ENCODE measurements at regions of chr14 and their contacts with region 1.

Region 1: GRCh38 chr14:54805521-54806322 is 96.9 kb downstream of the GCH1 start:
- DNase-seq: peak; percentile 86
- ATAC-seq: peak; percentile 88
- H3K4me3 Mint-ChIP-seq: no peak overlapping the region
- H3K27ac Mint-ChIP-seq: no peak overlapping the region
- H3K4me1 Mint-ChIP-seq: peaks cover 2% of the 10 kb centered on the region
- H3K27me3 Mint-ChIP-seq: peaks cover 21% of the 10 kb centered on the region
- CTCF ChIP-seq: peak; percentile 93

Region 2: GRCh38 chr14:54698966-54699530 is 106.7 kb before region 1 on chr14:
- CTCF ChIA-PET with region 1: no interaction called
- POLR2A ChIA-PET with region 1: no interaction called
- intact Hi-C with region 1: no loop called
- DNase-seq: no peak
- ATAC-seq: no peak
- H3K4me3 Mint-ChIP-seq: no peak overlapping the region
- H3K27ac Mint-ChIP-seq: no peak overlapping the region
- H3K4me1 Mint-ChIP-seq: peaks cover 3% of the 10 kb centered on the region
- H3K27me3 Mint-ChIP-seq: peaks cover 22% of the 10 kb centered on the region
- CTCF ChIP-seq: no peak

Region 3: DNA sequence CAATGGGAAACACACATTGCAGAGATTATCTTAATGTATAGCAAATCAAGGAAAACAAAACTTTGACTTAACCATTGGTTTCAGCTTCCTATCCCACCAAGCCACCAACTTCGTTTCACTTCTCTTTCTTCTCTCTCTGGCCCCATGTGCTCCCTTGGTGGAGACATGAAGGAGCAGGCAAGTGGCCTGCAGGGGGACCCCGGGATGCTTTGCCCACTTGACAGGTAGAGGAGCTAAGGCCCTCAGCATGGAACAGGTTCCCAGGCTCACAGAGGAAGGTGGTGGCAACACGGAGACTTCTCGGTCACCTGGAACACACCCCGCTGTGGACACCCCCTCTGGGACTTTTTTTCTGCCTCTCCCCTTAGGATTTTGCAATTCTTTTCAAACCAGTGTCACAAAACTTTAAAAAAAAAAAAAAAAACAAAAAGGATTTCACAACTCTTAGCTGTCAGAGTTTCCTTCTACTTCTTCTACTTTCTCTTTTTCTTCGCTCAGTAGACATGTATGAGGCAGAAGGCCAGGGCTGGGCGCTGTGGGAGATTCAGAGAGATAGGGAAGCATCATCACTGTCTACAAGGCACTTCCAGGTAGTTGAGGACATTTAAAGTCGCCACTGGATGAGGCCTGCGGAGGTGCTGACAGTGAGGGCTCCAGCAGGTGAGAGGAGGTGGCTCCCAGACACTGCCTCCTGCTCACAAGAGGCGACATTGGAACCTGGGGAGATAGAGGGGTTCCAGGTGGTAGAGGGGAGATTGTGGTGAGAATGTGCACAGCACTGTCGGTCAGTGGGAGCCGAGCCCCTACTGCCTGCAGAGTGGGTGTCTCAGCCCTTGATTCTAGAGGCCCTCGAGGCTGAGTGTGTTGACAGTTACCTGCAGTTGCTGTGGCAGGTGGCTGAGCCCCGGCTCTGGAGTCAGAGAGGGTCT is 22.7 kb before region 1 on chr14:
- CTCF ChIA-PET with region 1: interaction called, 82 read pairs
- POLR2A ChIA-PET with region 1: interaction called, 3 read pairs
- intact Hi-C with region 1: no loop called
- DNase-seq: peak; percentile 47
- ATAC-seq: peak; percentile 53
- H3K4me3 Mint-ChIP-seq: no peak overlapping the region
- H3K27ac Mint-ChIP-seq: no peak overlapping the region
- H3K4me1 Mint-ChIP-seq: peaks cover 9% of the 10 kb centered on the region
- H3K27me3 Mint-ChIP-seq: no peaks in the 10 kb centered on the region
- CTCF ChIP-seq: no peak

Region 4: GRCh38 chr14:54792288-54792687 is 13.4 kb before region 1 on chr14:
- CTCF ChIA-PET with region 1: interaction called, 51 read pairs
- POLR2A ChIA-PET with region 1: interaction called, 3 read pairs
- intact Hi-C with region 1: no loop called
- DNase-seq: no peak
- ATAC-seq: no peak
- H3K4me3 Mint-ChIP-seq: no peak overlapping the region
- H3K27ac Mint-ChIP-seq: no peak overlapping the region
- H3K4me1 Mint-ChIP-seq: no peaks in the 10 kb centered on the region
- H3K27me3 Mint-ChIP-seq: no peaks in the 10 kb centered on the region
- CTCF ChIP-seq: no peak

Region 5: GRCh38 chr14:54818201-54819133 is 12.7 kb after region 1 on chr14:
- CTCF ChIA-PET with region 1: interaction called, 29 read pairs
- POLR2A ChIA-PET with region 1: interaction called, 3 read pairs
- intact Hi-C with region 1: no loop called
- DNase-seq: no peak
- ATAC-seq: no peak
- H3K4me3 Mint-ChIP-seq: no peak overlapping the region
- H3K27ac Mint-ChIP-seq: no peak overlapping the region
- H3K4me1 Mint-ChIP-seq: no peaks in the 10 kb centered on the region
- H3K27me3 Mint-ChIP-seq: peaks cover 2% of the 10 kb centered on the region
- CTCF ChIP-seq: no peak

Measured in activated CD8-positive, alpha-beta T cell treated with anti-CD3 and anti-CD28 coated beads for 36 hours (primary cell).